Transverse colon (tissue), 4 donors: ENCODE measurements at regions of chr6 and their contacts with region 1.

Region 1: DNA sequence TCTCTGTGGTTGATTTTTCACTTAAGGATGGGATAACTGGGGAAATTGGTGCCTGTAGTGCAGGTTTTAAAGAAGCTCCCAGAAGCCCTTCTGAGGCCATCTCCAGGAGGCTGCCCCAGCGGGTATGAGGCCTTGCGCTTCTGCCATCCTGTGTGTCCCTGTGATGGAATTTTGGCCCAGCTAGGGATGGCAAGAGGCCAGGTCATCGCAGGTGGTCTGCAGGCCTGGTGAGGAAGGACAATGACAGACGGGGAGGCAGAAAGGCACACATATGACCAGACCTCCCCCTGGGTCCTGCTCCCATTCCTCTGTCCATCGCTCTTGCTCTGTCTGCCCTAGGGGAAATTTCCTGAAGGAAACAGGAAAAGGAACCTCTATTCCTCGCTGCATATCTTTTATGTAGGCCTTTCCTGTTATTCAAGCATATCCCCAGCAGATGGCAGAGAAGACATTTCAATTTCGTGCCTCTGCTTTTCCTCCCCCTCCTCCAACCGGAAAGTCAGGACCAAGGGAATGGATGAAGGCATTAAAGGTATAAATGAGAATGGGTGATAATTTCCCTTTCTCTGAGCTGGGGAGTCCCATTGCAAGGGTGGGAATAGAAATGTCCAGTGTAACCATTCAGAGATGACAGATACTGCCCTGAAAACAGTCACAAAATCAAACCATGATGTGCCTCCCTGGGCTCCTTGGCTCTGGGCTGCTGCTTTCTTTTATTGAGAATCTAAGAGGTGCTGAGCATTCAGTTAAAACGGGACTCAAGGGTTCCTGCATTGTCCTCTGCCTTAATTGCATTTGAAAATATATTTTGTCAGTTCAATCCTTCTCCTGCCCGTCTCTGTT is 17.6 kb upstream of the HLA-F start:
- DNase-seq: no peak
- H3K4me3 ChIP-seq: no peak overlapping the region
- H3K27ac ChIP-seq: no peak overlapping the region
- H3K4me1 ChIP-seq: no peaks in the 10 kb centered on the region
- H3K27me3 ChIP-seq: peaks cover 27% of the 10 kb centered on the region
- CTCF ChIP-seq: peak; percentile 37 to 69 (median 56)
- EP300 ChIP-seq: no peak
- POLR2A ChIP-seq: no peak

Region 2: DNA sequence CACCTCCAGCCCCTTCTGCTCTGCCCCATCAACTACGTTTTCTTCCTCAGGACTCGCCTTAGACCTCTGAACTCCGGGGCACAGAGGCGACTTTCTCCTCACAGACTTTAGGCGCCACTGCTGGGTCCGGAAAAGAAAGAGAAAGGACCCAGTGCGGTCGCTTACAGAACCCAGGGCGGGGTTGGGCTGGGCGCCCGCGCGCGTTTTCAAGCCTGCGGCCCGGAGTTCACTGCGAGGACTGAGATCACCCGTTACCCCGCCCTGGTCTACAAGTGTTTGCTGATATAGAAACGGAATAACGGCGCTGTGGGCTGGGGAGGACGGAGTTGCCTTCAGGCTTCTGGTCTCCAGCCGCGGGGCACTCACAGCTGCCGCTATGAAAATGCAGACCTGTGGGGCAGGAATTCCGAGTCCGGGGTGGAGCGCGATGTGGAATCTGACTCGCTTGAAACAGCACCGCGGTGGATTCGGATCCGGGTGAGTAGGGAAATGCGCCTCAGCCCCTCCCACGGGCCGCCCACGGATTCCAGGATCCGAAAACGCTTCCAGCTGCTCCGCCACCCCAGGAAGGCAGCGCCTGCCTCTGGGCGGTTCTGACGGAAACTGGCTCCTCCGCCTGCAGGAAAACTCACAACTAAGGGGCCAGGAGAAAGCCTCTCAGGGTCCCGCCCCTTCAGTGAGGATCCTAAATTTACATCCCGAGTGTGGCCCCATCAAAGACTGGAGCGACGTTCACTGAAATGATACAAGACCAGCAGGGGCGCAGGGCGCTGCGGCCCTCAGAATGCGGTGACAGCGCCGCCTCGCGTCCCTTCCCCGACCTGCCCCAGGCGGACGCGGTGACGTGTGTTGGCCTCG is 47.1 kb after region 1 on chr6:
- in situ Hi-C with region 1: no loop called
- intact Hi-C with region 1: loop called (anchors 5 kb)
- DNase-seq: peak; percentile 91
- H3K4me3 ChIP-seq: peak overlapping the region; percentile 64 to 81 (median 66)
- H3K27ac ChIP-seq: peak overlapping the region; percentile 88 to 95 (median 93)
- H3K4me1 ChIP-seq: peaks cover 4 to 29% (median 25%) of the 10 kb centered on the region in 4 donors
- H3K27me3 ChIP-seq: peaks cover 5% of the 10 kb centered on the region
- CTCF ChIP-seq: peak; percentile 87 to 97 (median 91)
- EP300 ChIP-seq: no peak
- POLR2A ChIP-seq: peak; percentile 28

Region 3: DNA sequence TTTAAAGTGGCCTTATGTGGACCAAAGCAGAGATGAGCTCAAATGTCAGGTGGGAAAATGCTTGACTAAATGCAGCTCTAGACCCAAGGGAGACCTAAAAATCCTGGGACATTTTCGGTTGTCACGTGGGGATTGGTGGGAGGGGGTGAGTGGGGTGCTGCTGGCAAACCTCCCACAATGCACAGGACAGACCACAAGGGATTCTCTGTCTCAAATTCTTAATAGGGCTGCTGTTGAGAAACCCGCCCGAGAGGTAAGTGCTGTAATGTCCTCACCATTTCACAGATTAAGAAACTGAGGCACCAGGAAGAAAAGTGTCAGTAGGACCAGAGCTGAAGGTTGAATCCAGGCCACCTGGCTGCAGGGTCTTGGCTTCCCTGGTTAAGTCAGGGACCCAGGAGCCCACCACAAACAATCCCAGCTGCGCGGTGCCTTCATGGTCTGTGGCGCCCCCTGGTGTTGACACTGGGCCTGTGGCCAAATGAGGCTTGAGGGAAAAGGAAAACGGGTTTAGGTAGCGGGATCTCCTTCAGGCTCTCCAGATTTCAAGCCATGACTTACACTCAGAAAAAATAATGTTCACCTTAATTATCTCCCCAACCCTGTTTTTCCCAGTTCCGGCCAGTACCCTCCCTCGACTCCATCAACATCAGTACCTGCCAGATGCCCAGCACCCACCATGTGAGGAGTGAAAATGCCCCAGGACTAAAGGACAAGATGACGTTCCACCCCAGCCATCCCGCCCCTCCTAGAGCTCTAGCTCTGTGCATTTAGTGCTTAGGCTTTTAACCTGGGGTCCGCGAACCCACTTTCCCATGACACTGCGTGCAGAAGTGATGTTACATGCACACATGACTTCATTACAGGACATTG is 129.2 kb after region 1 on chr6:
- in situ Hi-C with region 1: loop called in 1 of 4 experiments (anchors 25 kb)
- intact Hi-C with region 1: loop called (anchors 2 kb)
- DNase-seq: peak; percentile 37
- H3K4me3 ChIP-seq: no peak overlapping the region
- H3K27ac ChIP-seq: no peak overlapping the region
- H3K4me1 ChIP-seq: no peaks in the 10 kb centered on the region
- H3K27me3 ChIP-seq: peaks cover 79% of the 10 kb centered on the region
- CTCF ChIP-seq: peak; percentile 53 to 91 (median 78)
- EP300 ChIP-seq: no peak
- POLR2A ChIP-seq: no peak